ENCODE measurements at regions of chr11 and their contacts with region 1.

Region 1: DNA sequence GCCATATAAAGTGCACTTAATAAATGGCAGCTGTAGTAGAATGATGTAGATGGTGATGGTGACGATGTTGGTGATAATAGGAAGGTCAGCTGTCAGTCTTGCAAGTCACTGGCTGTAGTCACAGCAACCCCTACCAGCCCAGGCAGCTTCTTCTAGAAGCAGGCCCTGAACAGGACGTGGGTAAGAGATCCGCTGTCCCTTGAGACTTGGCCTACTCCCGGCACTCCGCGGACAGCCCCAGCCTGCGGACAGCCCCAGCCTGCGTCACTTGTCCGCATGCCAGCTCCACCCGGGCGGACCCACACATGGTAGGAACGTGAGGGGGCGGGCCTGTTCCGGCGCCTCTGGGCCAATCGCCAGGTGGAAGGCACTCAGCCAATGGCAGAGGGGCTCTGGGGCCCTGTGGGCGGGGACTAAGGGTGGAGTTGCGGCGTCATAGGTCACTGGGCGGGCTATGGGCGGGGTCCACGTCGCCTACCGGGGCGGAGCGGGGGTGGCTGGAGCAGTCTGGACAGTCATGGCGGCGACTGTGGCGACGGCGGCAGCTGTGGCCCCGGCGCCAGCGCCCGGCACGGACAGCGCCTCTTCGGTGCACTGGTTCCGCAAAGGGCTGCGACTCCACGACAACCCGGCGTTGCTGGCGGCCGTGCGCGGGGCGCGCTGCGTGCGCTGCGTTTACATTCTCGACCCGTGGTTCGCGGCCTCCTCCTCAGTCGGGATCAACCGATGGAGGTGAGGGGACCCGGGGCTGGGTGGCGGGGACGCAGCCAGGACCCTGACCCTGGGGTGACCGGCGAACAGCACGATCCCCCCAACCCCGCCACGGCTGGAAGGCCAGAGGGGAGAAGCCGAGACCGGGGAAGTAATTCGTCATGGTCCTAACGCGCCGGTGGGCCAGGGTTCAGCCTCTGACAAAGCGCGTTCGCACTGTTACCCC is at the start of gene CRY2:
- DNase-seq: peak; percentile 99
- ATAC-seq: peak; percentile 98
- total RNA-seq, gene CRY2: 69.8 TPM

Region 2: GRCh38 chr11:45665206-45665932 is 181.9 kb before region 1 on chr11 and contains the start of gene CHST1:
- intact Hi-C with region 1: loop called (anchors 10 kb)
- DNase-seq: peak; percentile 76
- ATAC-seq: peak; percentile 86
- total RNA-seq, gene CHST1: 3.2 TPM

Region 3: DNA sequence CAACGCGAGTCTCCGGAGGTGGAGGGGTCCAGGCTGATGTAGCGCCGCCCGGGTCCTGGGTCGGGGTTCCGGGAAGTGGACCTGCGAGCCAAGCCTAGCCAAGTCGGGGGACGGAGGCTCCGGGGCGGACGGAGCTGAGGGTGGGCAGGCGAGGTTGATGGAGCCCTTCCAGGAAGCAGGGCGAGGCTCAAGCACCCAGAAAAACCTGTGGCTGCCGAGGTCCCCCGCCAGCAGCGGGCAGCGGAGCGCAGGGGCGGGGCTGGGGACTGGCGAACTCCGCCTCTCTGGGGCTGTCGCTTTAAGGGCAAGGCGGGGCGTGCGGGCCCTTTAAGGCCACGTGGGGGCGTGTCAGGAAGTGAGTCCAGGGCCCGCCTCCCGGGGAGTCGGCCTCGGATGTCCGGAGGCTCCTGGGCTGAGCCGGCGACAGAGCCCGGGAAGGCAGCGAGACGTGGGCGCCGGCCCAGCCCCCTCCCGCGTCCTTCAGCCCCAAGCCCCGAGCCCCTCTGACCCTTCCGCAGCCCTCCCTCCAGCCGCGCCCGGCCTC is 42.4 kb before region 1 on chr11 and contains the start of gene SLC35C1:
- intact Hi-C with region 1: loop called (anchors 2 kb)
- DNase-seq: peak; percentile 99
- ATAC-seq: peak; percentile 97
- total RNA-seq, gene SLC35C1: 6.0 TPM

Region 4: GRCh38 chr11:45815449-45816146 is 31.6 kb before region 1 on chr11:
- intact Hi-C with region 1: no loop called
- DNase-seq: no peak
- ATAC-seq: no peak

Region 5: DNA sequence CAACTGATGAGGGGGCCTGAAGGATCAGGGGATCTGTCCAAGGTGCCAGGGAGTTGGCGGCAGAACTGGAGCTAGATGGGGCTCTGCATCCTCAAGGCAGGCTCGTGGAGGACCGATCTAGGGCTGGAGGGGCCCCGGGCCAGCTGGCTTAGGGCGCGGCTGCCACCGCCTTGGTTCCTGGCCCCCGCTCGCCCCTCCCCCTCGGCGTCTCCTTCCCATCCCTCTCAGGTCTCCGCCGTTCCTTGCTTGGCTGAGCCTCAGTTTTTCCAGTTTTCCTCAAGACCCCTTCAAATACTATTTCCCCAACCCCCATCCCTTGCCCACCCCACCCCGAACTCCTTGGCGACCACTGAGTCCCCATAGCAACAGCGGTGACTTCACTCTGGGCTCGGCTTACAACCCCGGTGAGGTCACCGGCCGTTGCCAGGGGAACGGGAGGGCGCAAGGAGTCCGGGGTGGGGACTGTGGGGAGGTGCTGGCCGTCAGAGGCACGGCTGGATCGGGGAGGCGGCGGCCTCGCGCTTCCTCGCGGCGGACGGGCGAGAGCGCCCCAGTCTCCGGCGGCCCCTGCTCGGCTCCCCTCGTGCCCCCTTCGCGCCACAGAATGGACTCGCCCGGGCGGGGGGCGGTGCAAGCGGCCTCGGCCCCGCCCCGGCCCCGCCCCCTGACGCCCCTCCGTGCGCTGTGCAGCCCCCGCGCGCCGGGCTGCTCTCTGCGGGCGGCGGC is 52.4 kb after region 1 on chr11:
- intact Hi-C with region 1: no loop called
- DNase-seq: peak; percentile 93
- ATAC-seq: peak; percentile 89

Region 6: GRCh38 chr11:45917623-45918330 is 70.5 kb after region 1 on chr11 and contains the start of gene PEX16:
- intact Hi-C with region 1: loop called (anchors 2 kb)
- DNase-seq: peak; percentile 98
- ATAC-seq: peak; percentile 96
- total RNA-seq, gene PEX16: 10.4 TPM

Region 7: GRCh38 chr11:46006418-46007070 is 159.3 kb after region 1 on chr11:
- intact Hi-C with region 1: loop called (anchors 2 kb)
- DNase-seq: no peak
- ATAC-seq: peak; percentile 72

Region 8: DNA sequence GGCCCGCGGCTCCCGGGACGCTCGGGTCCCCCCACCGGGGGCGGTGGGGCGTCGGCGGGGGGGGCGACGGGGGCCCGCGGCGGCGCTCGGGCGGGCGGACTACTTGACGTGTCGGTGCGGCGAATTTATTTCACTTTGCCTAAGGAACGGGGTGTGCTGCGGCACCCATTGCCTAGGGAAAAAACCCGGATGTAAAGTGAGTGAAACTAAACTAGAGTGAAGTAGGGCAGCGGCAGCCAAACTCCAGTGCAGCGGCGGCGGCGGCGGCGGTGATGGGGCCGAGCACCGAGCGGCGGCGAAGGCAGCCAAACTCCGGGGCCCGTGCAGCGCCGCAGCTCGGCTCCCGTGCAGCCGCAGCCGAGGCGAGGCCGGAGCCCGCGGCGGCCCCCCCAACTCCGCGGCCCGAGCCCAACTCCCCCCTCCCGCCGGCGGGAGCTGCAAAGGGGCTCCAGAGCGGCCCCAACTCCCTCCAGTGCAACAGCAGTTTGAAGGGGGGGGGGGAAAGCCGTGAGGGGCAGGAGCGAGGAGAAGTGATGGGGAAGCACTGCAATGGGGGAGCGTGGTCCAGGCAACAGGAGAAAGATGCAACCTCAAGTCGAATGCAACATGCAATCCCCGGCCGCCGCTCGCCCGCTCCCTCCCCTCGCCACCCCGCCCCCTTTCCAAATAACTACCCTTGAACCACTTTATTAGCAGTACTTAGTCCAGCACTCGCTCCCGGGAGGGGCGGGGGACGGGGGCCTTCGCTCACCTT is 274.7 kb after region 1 on chr11:
- intact Hi-C with region 1: loop called (anchors 5 kb)
- DNase-seq: peak; percentile 90
- ATAC-seq: peak; percentile 33